AG04450 (cell line): ENCODE measurements at regions of chr3 and their contacts with region 1.

Region 1: GRCh38 chr3:157606011-157606851 is 103.0 kb upstream of the VEPH1 start:
- DNase-seq: peak; percentile 39
- H3K4me3 ChIP-seq: no peak overlapping the region
- H3K27ac ChIP-seq: no peak overlapping the region
- H3K27me3 ChIP-seq: peaks cover 4% of the 10 kb centered on the region
- CTCF ChIP-seq: peak; percentile 91

Region 2: DNA sequence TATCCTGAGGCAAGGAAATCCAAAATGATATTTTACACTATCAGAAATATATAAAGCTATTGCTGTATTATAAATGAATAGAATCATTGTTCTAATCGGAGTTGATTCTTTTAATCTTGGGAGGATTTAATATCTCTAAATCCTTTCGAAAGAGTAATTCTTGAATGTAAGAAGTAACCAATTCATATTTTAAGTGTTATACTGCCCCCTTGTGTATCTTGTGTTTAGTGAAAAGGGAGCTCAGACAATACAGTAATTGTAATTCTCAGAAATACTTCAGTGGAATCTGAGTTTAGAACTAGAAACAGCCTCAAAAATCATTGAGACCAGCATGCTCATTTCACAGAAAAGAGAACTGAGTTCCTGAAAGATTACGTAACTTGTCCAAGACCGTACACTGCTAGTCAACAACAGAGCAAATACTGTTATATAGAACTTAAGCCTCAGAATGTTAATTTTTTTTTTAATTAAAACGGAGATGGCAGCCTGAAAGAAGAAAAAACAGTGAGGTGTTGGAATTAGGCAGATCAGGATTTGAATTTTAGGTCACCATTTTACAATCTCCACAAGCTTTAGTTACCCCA is 1904.3 kb before region 1 on chr3:
- CTCF ChIA-PET with region 1: interaction called, 10 read pairs
- POLR2A ChIA-PET with region 1: no interaction called
- DNase-seq: peak; percentile 8
- H3K4me3 ChIP-seq: no peak overlapping the region
- H3K27ac ChIP-seq: no peak overlapping the region
- H3K27me3 ChIP-seq: no peaks in the 10 kb centered on the region
- CTCF ChIP-seq: peak; percentile 62

Region 3: DNA sequence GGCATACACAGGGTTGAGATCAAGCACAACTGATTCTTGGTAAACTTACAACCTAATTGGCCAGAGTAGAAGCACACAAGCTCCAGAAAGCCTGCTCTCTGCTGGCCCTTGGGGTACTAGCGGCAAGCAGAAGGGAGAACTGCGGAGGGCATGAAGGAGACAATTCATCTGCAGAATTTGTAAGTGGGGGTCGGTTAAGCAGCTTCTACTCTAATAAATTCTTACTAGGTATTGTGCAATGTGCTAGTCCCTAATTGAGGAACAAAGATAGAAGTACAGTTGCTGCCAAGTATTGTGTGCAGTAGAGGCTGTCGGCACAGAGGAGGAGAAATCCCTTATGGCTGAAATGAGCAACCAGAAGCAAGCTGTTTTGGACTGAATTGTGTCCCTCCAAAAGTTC is 11.8 kb before region 1 on chr3:
- CTCF ChIA-PET with region 1: interaction called, 32 read pairs
- POLR2A ChIA-PET with region 1: no interaction called
- DNase-seq: no peak
- H3K4me3 ChIP-seq: no peak overlapping the region
- H3K27ac ChIP-seq: no peak overlapping the region
- H3K27me3 ChIP-seq: peaks cover 29% of the 10 kb centered on the region
- CTCF ChIP-seq: peak; percentile 31; the same call in 1 of the 2 replicates

Region 4: GRCh38 chr3:158109804-158110657 is 503.8 kb after region 1 on chr3 and contains the start of gene RSRC1:
- CTCF ChIA-PET with region 1: interaction called, 16 read pairs
- POLR2A ChIA-PET with region 1: no interaction called
- DNase-seq: peak; percentile 65
- H3K4me3 ChIP-seq: peak within 1 kb of the TSS; percentile 90
- H3K27ac ChIP-seq: peak within 1 kb of the TSS; percentile 80
- H3K27me3 ChIP-seq: peaks cover 35% of the 10 kb centered on the region
- CTCF ChIP-seq: no peak
- polyA plus RNA-seq, gene RSRC1: 5.7 and 6.7 TPM in 2 replicates

Region 5: DNA sequence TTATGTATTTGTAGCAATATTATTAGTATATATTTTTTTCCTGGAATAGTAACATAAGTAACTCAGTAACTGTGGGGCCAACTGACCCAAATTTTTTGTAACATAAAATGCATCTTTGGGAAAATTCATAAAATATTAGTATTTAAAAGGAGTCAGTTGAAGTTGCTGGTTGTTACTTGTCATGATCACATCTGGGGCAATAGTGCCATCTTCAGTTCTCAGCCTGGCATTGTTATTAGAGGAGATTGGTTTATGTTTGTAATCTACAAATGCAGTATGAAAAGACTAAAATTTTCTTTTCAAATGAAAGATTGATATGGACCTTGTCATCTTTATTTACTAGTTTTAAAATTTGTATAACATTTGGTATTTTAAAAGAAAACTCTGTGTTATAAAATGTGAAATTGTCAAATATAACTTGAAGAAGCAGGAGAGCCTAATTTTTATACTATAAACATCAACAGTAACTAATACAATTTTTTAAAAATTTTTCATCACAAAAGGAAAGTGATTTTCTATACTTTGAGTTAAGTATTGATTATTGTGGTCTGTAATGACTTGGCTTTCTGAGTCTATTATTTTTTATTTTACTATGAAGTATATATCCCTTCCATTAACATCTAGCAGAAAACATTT is 926.0 kb after region 1 on chr3:
- CTCF ChIA-PET with region 1: interaction called, 45 read pairs
- POLR2A ChIA-PET with region 1: no interaction called
- DNase-seq: peak; percentile 23
- H3K4me3 ChIP-seq: no peak overlapping the region
- H3K27ac ChIP-seq: no peak overlapping the region
- H3K27me3 ChIP-seq: no peaks in the 10 kb centered on the region
- CTCF ChIP-seq: peak; percentile 66